ENCODE measurements at regions of chr16 and their contacts with region 1.

Region 1: DNA sequence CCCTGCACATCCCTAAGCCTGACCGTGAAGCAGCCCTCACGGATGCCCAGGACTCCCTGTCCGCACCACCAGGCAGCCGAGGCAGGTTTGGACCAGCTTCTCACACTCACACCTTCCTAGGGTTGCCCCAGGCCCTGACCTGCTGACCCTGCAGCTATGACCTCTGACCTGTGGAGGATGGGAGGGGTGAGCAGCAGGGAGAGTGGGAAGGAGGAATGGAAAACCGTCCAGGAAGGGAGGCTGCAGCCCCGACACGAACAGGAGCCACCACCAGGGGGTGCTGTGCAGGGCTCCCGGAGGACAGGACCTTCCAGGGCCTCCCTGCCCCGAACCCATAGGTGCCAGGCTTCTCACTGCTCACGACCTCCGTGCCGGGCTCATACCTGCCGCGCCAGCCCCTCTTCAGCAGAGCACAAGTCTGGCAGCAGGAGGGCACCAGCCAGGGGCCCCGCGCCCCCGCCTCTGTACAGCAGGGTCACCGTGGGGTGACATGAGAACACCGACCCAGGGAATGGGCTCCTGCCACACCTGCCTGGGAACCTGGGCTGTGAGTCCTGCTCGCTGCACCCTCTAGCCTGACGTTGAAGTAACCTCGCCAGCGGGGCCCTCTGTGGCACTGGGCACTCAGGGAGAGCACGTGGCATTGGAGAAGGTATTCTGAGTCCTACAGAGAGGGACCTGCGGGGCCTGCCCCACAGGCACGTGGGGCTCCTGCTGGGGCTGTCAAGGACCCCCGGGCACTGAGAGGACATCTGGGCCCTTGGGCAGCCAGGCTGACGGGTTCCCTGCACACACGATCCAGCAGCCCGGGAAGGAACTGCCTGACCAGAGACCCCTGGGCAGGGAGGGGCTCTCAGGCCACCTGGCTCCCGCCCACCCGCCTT is 37.6 kb downstream of the CTU2 start:
- DNase-seq: peak; percentile 75
- ATAC-seq: no peak
- H3K4me3 ChIP-seq: no peak overlapping the region
- H3K4me3 Mint-ChIP-seq: peak overlapping the region; percentile 34
- H3K27ac ChIP-seq: no peak overlapping the region
- H3K27ac Mint-ChIP-seq: peak overlapping the region; percentile 78
- H3K4me1 ChIP-seq: peaks cover 47 to 59% of the 10 kb centered on the region in 2 donors
- H3K4me1 Mint-ChIP-seq: peaks cover 50% of the 10 kb centered on the region
- H3K27me3 ChIP-seq: no peaks in the 10 kb centered on the region
- H3K27me3 Mint-ChIP-seq: no peaks in the 10 kb centered on the region
- CTCF ChIP-seq: peak; percentile 93

Region 2: DNA sequence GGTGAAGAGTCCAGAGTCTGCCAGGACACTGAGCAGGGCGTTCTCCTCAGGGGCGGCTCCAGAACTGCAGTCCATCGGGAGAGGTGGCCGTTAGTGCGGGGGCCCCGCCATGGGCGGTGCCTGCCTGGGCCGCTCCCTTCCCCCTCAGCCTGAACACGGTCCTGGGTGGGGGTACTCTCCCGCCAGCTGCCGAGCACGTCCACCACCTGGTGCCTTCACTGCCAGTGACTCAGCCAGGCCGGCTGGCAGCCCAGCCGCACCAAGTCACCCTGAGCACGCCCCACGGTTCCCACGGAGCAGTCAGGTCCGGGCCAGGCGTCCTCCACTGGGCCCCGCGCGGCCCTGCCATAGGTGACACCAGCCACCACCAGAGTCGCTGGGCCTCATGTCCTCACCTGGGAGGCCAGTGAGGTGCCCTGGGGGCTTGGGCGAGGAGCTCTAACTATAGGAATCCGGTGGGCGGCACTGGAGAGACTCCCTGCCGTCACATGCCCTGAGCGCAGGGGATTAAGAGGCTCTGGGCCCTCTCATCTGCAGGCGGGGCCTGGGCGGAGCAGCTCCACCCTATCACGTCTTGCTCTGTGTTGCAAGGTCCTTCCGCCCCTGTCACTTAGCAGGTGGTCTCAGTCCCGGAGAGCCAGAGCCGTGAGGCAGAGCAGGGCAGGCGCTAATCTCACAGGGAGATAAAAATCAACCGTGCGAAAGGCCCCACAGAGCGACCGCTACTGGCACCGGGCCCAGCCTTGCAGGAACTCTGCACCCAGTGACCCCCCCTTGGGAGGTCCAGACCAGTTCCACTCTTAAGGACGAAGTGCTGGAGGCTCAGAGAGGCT is 26.7 kb after region 1 on chr16:
- CTCF ChIA-PET with region 1: interaction called, 5 read pairs
- POLR2A ChIA-PET with region 1: interaction called, 14 read pairs
- intact Hi-C with region 1: loop called (anchors 2 kb)
- DNase-seq: peak; percentile 70
- ATAC-seq: peak; percentile 42
- H3K4me3 ChIP-seq: peak overlapping the region in 2 of 5 experiments; percentile 4 to 11
- H3K4me3 Mint-ChIP-seq: peak overlapping the region; percentile 65
- H3K27ac ChIP-seq: peak overlapping the region; percentile 24 to 43
- H3K27ac Mint-ChIP-seq: peak overlapping the region; percentile 84
- H3K4me1 ChIP-seq: peaks cover 52 to 69% of the 10 kb centered on the region in 2 donors
- H3K4me1 Mint-ChIP-seq: peaks cover 53% of the 10 kb centered on the region
- H3K27me3 ChIP-seq: no peaks in the 10 kb centered on the region
- H3K27me3 Mint-ChIP-seq: no peaks in the 10 kb centered on the region
- CTCF ChIP-seq: no peak

Region 3: DNA sequence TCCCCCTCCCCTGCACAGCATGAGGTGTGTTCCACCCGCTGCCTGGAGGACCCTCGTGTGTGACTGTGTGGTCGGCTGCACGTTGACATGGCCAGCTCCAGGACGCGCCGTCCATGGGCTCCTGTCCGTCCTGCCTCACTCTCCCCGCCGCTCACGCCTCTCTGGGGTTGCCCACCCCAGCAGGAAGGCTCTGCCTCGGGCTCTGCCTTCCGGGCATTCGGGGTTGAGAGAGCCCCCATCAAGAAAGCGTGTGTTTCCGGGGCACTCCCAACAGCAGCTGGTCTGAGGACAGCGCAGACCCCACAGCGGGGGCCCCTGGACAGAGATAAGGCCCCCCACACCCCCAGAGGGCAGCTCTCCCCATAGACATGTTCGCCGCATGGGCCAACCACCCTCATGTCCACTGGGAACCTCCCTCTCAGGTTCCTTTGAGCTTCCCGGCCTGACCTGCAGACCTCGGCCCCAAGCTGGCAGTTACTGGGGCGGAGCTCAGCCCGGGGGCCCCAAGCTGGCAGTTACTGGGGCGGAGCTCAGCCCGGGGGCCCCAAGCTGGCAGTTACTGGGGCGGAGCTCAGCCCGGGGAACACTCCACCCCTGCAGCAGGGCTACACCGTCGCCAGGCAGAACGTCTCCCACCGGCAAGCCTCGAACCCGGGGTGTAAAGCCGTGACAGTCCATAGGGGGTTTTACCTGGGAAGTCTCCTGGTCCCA is 49.5 kb after region 1 on chr16:
- CTCF ChIA-PET with region 1: interaction called, 138 read pairs
- POLR2A ChIA-PET with region 1: interaction called, 10 read pairs
- intact Hi-C with region 1: no loop called
- DNase-seq: no peak
- ATAC-seq: peak; percentile 42
- H3K4me3 ChIP-seq: peak overlapping the region in 1 of 5 experiments; percentile 15
- H3K4me3 Mint-ChIP-seq: peak overlapping the region; percentile 34
- H3K27ac ChIP-seq: no peak overlapping the region
- H3K27ac Mint-ChIP-seq: peak overlapping the region; percentile 32
- H3K4me1 ChIP-seq: peaks cover 52 to 62% of the 10 kb centered on the region in 2 donors
- H3K4me1 Mint-ChIP-seq: peaks cover 49% of the 10 kb centered on the region
- H3K27me3 ChIP-seq: no peaks in the 10 kb centered on the region
- H3K27me3 Mint-ChIP-seq: no peaks in the 10 kb centered on the region
- CTCF ChIP-seq: no peak